ENCODE measurements at regions of chr6 and their contacts with region 1.

Region 1: GRCh38 chr6:119261945-119262286 is 87.6 kb downstream of the MAN1A1 start:
- DNase-seq: no peak
- ATAC-seq: peak; percentile 6; the same call in 1 of the 2 replicates
- H3K4me3 ChIP-seq: no peak overlapping the region; the same call in 1 of the 2 replicates
- H3K27ac ChIP-seq: peak overlapping the region; percentile 75
- H3K4me1 ChIP-seq: peaks cover 32% of the 10 kb centered on the region
- H3K27me3 ChIP-seq: no peaks in the 10 kb centered on the region
- CTCF ChIP-seq: no peak

Region 2: DNA sequence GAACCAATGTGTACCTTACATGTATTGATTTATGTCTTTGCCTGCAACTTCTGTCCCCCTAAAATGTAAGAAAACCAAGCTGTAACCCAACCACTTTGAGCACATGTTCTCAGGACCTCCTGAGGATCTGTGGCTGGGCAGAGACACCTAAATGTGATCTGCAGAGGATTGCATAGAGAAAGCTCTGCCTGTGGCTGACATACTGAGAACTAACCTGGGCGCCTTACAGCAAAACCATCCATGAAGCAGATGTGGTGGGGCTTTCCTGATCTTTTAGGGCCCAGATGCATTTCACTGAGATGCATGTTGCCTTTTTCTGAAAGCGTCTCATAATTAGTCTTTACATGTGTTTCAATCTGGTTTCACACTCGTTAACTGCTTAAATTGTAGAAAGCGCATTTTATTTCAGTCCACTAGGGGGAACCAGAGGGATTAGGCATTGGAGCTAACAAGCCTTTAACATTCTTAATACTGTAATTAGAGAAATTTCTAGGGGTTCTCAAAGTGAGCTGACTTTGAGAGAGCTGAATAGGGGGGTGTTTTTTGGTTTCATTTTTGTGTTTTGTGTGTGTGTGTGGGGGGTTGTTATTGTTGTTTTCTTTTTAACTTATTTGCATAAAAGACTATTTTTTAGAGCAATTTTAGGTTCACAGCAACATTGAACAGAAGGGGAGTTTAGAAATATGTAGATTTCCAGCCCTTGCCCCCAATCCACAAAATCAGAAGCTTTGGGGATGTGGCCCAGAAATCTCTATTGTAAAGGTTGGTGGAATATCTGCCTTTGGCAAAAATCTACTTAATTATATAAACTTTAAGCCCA is 132.6 kb before region 1 on chr6:
- CTCF ChIA-PET with region 1: no interaction called
- POLR2A ChIA-PET with region 1: no interaction called
- intact Hi-C with region 1: loop called (anchors 5 kb)
- DNase-seq: peak; percentile 75
- ATAC-seq: peak; percentile 62
- H3K4me3 ChIP-seq: peak overlapping the region; percentile 13; the same call in 1 of the 2 replicates
- H3K27ac ChIP-seq: peak overlapping the region; percentile 74
- H3K4me1 ChIP-seq: peaks cover 26% of the 10 kb centered on the region
- H3K27me3 ChIP-seq: no peaks in the 10 kb centered on the region
- CTCF ChIP-seq: peak; percentile 81

Region 3: GRCh38 chr6:119308048-119308570 is 46.2 kb after region 1 on chr6:
- CTCF ChIA-PET with region 1: no interaction called
- POLR2A ChIA-PET with region 1: no interaction called
- intact Hi-C with region 1: loop called (anchors 1 kb)
- DNase-seq: peak; percentile 78
- ATAC-seq: peak; percentile 54
- H3K4me3 ChIP-seq: no peak overlapping the region
- H3K27ac ChIP-seq: peak overlapping the region; percentile 31
- H3K4me1 ChIP-seq: peaks cover 16% of the 10 kb centered on the region
- H3K27me3 ChIP-seq: no peaks in the 10 kb centered on the region
- CTCF ChIP-seq: no peak

Region 4: GRCh38 chr6:119627908-119628669 is 366.2 kb after region 1 on chr6:
- CTCF ChIA-PET with region 1: no interaction called
- POLR2A ChIA-PET with region 1: no interaction called
- intact Hi-C with region 1: loop called (anchors 5 kb)
- DNase-seq: peak; percentile 71
- ATAC-seq: peak; percentile 78
- H3K4me3 ChIP-seq: peak overlapping the region; percentile 7; the same call in 1 of the 2 replicates
- H3K27ac ChIP-seq: peak overlapping the region; percentile 93
- H3K4me1 ChIP-seq: peaks cover 31% of the 10 kb centered on the region
- H3K27me3 ChIP-seq: no peaks in the 10 kb centered on the region
- CTCF ChIP-seq: peak; percentile 32; the same call in 1 of the 2 replicates

Measured in PC-3 (cell line).